ENCODE measurements at regions of chr17 and their contacts with region 1.

Region 1: DNA sequence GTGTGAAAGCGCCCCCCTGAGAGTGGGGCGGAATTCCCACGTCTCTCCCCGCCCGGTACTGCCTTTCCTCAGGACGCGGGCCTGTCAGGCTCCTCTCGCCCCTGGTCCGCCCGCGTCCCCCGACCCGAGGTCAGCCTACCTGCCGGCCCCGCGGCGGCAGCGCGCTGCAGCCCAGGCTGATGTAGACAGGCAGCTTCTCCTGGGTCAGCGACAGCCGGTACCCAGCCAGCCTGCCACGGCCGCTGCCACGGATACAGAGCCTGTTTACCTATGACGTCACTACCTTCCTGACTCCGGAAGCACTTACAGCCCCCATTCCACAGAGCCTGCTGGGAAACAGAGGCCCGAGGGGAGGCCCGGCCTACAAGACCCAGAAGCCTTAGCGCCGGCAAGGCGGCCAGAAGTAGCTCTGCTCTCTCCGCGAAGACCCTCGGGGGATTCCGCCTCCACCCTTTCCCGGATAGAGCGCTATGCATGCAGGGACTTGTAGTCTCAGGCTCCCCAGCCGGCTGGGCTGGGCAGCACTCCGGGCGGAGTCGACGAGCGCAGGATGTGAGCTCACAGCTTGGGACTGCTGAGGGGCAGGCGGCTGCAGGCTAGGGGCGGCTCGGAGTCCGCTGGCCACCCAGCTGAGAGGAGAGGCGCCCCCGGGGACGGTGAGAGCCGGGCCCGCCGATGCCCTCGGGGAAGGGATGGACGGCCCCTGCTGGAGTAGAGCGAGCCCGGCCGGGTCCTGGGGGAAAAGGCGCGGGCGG is at the starts of genes IFT20 and TNFAIP1:
- DNase-seq: peak; percentile 96 to 100 (median 99)
- H3K4me3 ChIP-seq: peak within 1 kb of the TSS; percentile 86 to 95
- H3K4me3 Mint-ChIP-seq: peak within 1 kb of the TSS; percentile 95 to 98 (median 97)
- H3K27ac ChIP-seq: peak within 1 kb of the TSS; percentile 93
- H3K27ac Mint-ChIP-seq: peak within 1 kb of the TSS; percentile 97 to 98 (median 97)
- H3K4me1 ChIP-seq: peaks cover 30% of the 10 kb centered on the region
- H3K4me1 Mint-ChIP-seq: peaks cover 29 to 66% (median 42%) of the 10 kb centered on the region in 4 donors
- H3K27me3 ChIP-seq: no peaks in the 10 kb centered on the region
- H3K27me3 Mint-ChIP-seq: no peaks in the 10 kb centered on the region
- total RNA-seq, gene IFT20: 42.9 to 43.6 TPM
- total RNA-seq, gene TNFAIP1: 26.2 to 32.1 TPM

Region 2: GRCh38 chr17:28252436-28252835 is 82.9 kb before region 1 on chr17:
- CTCF ChIA-PET with region 1: interaction called, 4 read pairs
- POLR2A ChIA-PET with region 1: interaction called, 3 read pairs
- intact Hi-C with region 1: loop called (anchors 1 kb)
- DNase-seq: no peak
- H3K4me3 ChIP-seq: no peak overlapping the region
- H3K4me3 Mint-ChIP-seq: peak overlapping the region in 3 of 8 donors; percentile 30 to 48 (median 38)
- H3K27ac ChIP-seq: no peak overlapping the region
- H3K27ac Mint-ChIP-seq: no peak overlapping the region
- H3K4me1 ChIP-seq: peaks cover 8% of the 10 kb centered on the region
- H3K4me1 Mint-ChIP-seq: peaks cover 5 to 8% (median 7%) of the 10 kb centered on the region in 4 donors
- H3K27me3 ChIP-seq: peaks cover 6% of the 10 kb centered on the region
- H3K27me3 Mint-ChIP-seq: peaks cover 5 to 6% of the 10 kb centered on the region in 2 donors

Region 3: GRCh38 chr17:28346746-28347246 is 11.4 kb after region 1 on chr17:
- CTCF ChIA-PET with region 1: interaction called, 3 read pairs
- POLR2A ChIA-PET with region 1: interaction called, 17 read pairs
- intact Hi-C with region 1: no loop called
- DNase-seq: no peak
- H3K4me3 ChIP-seq: no peak overlapping the region
- H3K4me3 Mint-ChIP-seq: no peak overlapping the region
- H3K27ac ChIP-seq: no peak overlapping the region
- H3K27ac Mint-ChIP-seq: no peak overlapping the region
- H3K4me1 ChIP-seq: no peaks in the 10 kb centered on the region
- H3K4me1 Mint-ChIP-seq: no peaks in the 10 kb centered on the region
- H3K27me3 ChIP-seq: no peaks in the 10 kb centered on the region
- H3K27me3 Mint-ChIP-seq: no peaks in the 10 kb centered on the region

Region 4: DNA sequence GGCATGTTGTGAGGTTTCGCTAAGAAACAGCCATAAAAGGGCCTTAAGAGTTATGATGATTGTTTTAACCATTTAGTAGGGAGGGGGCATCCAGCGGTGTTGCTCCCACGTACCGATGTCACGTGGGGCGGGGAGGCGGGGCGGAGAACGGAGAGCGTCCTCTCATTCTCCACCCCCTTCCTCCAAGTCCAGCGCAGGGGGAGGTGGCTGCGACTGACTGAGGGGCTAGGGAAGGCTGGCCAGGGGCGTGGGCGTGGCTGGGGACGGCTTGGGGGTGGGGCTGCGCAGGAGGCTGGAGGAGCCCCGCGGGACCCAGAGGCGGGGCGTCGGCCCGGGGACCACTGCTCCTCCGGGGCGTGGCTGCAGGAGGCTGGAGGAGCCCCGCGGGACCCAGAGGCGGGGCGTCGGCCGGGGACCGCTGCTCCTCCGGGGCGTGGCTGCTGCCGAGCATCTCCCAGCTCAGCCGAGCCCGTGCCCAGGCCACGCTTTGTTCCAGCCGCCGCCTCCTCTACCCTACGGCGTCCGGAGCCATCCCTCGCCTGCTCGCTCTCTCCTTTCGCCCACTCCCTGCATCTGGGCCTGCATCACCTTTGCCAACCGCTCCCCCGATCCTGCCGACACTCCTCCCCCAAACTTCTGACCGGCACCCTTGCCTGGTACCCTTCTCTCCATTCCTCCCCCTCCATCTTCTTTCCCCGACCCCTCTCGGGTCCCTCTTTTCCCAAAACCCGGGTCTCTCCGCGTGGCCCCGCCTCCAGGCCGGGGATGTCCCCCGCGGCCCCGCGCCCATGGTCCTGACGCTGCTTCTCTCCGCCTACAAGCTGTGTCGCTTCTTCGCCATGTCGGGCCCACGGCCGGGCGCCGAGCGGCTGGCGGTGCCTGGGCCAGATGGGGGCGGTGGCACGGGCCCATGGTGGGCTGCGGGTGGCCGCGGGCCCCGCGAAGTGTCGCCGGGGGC is 36.1 kb after region 1 on chr17 and contains the start of gene SARM1:
- CTCF ChIA-PET with region 1: interaction called, 4 read pairs
- POLR2A ChIA-PET with region 1: interaction called, 15 read pairs
- intact Hi-C with region 1: loop called (anchors 1 kb)
- DNase-seq: peak; percentile 73 to 87 (median 79)
- H3K4me3 ChIP-seq: peak within 1 kb of the TSS in 1 of 2 donors; percentile 81
- H3K4me3 Mint-ChIP-seq: peak within 1 kb of the TSS; percentile 91 to 100 (median 96)
- H3K27ac ChIP-seq: peak within 1 kb of the TSS; percentile 85
- H3K27ac Mint-ChIP-seq: peak within 1 kb of the TSS; percentile 88 to 99 (median 97)
- H3K4me1 ChIP-seq: peaks cover 14% of the 10 kb centered on the region
- H3K4me1 Mint-ChIP-seq: peaks cover 13 to 29% (median 17%) of the 10 kb centered on the region in 4 donors
- H3K27me3 ChIP-seq: no peaks in the 10 kb centered on the region
- H3K27me3 Mint-ChIP-seq: no peaks in the 10 kb centered on the region
- total RNA-seq, gene SARM1: 37.6 to 40.3 TPM

Region 5: DNA sequence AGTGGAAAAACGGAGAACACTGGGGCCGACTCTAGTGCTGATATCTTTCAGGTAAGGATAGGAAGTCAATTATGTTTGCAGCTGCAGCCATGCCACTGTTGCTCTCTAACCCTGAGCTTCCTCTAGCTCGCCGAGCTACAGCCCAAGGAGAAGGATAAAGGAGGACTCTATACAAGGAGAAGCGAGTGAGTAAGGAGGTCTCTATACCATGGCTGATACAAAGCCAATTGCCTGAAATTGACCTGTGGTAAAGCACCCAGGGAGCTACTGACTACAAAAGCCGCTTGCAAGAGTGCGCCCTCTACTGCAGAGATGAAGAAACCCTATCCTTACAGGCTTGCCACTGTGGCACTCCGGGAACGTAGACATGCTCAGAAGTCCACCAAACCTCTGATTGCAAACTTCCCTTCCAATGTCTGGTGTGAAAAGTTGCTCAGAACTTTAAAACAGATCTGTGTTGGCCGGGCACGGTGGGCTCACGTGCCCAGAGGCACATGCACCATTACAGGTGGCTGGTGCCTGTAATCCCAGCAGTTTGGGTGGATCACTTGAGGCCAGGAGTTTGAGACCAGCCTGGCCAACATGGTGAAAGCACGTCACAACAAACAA is 81.4 kb after region 1 on chr17:
- CTCF ChIA-PET with region 1: interaction called, 10 read pairs
- POLR2A ChIA-PET with region 1: interaction called, 5 read pairs
- intact Hi-C with region 1: no loop called
- DNase-seq: peak; percentile 37 to 58 (median 45)
- H3K4me3 ChIP-seq: no peak overlapping the region
- H3K4me3 Mint-ChIP-seq: no peak overlapping the region
- H3K27ac ChIP-seq: no peak overlapping the region
- H3K27ac Mint-ChIP-seq: peak overlapping the region in 1 of 7 donors; percentile 62
- H3K4me1 ChIP-seq: no peaks in the 10 kb centered on the region
- H3K4me1 Mint-ChIP-seq: peaks cover 4 to 7% (median 5%) of the 10 kb centered on the region in 4 donors
- H3K27me3 ChIP-seq: no peaks in the 10 kb centered on the region
- H3K27me3 Mint-ChIP-seq: peaks cover 5 to 19% of the 10 kb centered on the region in 2 donors

Measured in CD4-positive, alpha-beta memory T cell (primary cell).